ENCODE measurements at regions of chr4 and their contacts with region 1.

Region 1: DNA sequence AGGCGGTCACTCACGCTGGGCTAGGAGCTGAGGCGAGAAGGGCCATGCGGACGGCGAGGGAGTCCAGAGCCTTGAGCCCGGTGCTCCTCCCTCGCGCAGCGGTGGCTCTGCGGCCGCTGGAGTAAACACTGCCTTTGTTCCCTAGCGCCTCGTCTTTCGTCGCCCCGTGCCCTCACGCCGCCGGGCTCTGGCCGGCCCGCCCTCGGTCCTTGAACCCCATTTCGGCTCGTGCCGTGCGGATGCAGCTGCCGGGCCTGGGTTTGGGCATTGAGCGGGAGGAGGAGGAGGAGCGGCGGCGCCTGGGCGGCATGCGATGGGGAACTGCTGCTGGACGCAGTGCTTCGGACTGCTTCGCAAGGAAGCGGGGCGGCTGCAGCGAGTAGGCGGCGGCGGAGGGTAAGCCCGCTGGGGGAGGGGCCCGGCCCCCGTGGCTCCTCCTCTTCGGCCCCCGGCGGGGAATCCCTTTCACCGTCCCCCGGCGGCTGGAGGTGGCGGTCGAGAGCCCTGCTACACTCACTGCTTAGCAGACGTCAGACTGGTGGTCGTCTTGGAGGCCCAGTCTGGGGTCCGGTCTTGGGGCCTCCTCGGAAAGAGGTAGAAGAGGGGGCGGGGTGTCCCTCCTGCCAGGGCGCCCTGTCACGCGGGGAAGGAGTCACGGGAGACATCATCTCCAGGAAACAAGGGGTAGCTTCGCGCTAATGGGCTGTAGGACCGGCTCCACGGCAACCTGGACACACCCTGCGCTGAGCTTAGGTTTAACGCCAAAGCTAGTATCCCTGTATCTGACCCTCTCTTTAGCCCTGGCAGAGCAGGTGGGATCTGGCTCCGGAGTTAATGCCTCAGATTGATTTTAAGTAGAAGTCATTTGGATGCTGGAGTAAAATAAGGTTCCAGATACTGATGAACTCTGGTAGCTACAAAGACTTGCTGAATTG is at the start of gene AP1AR:
- DNase-seq: peak; percentile 76 to 89 (median 82)
- H3K4me3 ChIP-seq: peak within 1 kb of the TSS; percentile 59 to 92 (median 84)
- H3K27ac ChIP-seq: peak within 1 kb of the TSS; percentile 84 to 97 (median 95)
- H3K4me1 ChIP-seq: peaks cover 3 to 12% of the 10 kb centered on the region in 2 donors
- H3K27me3 ChIP-seq: no peaks in the 10 kb centered on the region
- CTCF ChIP-seq: peak in 4 of 6 experiments; percentile 24 to 38 (median 29)
- POLR2A ChIP-seq: peak; percentile 72 to 95
- total RNA-seq, gene AP1AR: 13.1 to 30.1 (median 19.6) TPM

Region 2: GRCh38 chr4:112145326-112145819 is 86.7 kb before region 1 on chr4 and contains the start of gene FAM241A:
- intact Hi-C with region 1: loop called in 1 of 2 experiments (anchors 10 kb)
- DNase-seq: peak; percentile 85 to 92 (median 89)
- H3K4me3 ChIP-seq: peak within 1 kb of the TSS; percentile 47 to 95 (median 84)
- H3K27ac ChIP-seq: peak within 1 kb of the TSS in 4 of 5 donors; percentile 46 to 87 (median 85)
- H3K4me1 ChIP-seq: peaks cover under 1 to 31% of the 10 kb centered on the region in 2 donors
- H3K27me3 ChIP-seq: no peaks in the 10 kb centered on the region
- CTCF ChIP-seq: no peak
- POLR2A ChIP-seq: peak; percentile 82 to 89
- total RNA-seq, gene FAM241A: 0.55 to 4.6 (median 2.3) TPM